MCF 10A (cell line): ENCODE measurements at regions of chr13 and their contacts with region 1.

Region 1: DNA sequence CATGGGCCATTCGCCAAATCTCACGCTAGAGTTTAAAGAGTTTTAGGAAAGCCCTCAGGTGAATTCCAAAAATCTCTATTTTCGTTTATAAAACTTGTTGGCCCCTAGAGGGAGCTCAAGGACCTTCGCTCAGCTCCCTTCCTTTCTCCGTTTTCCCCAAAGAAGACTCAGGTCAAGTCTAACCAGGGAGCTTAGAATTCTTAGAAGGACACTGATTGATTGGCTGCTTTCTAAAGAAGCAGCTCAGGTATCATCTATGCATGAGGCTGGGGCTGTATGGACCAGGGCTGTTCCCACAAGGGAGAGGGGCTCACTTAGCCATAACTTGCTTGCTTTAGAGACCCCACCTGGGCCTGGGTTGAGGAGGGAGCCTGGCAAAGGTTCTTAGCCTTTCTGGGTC is 20.5 kb downstream of the DZIP1 start:
- DNase-seq: peak; percentile 81
- H3K4me3 Mint-ChIP-seq: no peak overlapping the region
- H3K27ac Mint-ChIP-seq: no peak overlapping the region
- H3K4me1 Mint-ChIP-seq: no peaks in the 10 kb centered on the region
- H3K27me3 Mint-ChIP-seq: no peaks in the 10 kb centered on the region
- CTCF ChIP-seq: peak; percentile 73

Region 2: GRCh38 chr13:95585869-95586268 is 38.2 kb before region 1 on chr13:
- CTCF ChIA-PET with region 1: interaction called, 11 read pairs
- POLR2A ChIA-PET with region 1: no interaction called
- intact Hi-C with region 1: no loop called
- DNase-seq: no peak
- H3K4me3 Mint-ChIP-seq: no peak overlapping the region
- H3K27ac Mint-ChIP-seq: no peak overlapping the region
- H3K4me1 Mint-ChIP-seq: peaks cover 4% of the 10 kb centered on the region
- H3K27me3 Mint-ChIP-seq: no peaks in the 10 kb centered on the region
- CTCF ChIP-seq: no peak

Region 3: GRCh38 chr13:95603887-95604533 is 20.0 kb before region 1 on chr13:
- CTCF ChIA-PET with region 1: interaction called, 63 read pairs
- POLR2A ChIA-PET with region 1: interaction called, 15 read pairs
- intact Hi-C with region 1: no loop called
- DNase-seq: peak; percentile 97
- H3K4me3 Mint-ChIP-seq: peak overlapping the region; percentile 26
- H3K27ac Mint-ChIP-seq: peak overlapping the region; percentile 85
- H3K4me1 Mint-ChIP-seq: peaks cover 56% of the 10 kb centered on the region
- H3K27me3 Mint-ChIP-seq: no peaks in the 10 kb centered on the region
- CTCF ChIP-seq: no peak

Region 4: DNA sequence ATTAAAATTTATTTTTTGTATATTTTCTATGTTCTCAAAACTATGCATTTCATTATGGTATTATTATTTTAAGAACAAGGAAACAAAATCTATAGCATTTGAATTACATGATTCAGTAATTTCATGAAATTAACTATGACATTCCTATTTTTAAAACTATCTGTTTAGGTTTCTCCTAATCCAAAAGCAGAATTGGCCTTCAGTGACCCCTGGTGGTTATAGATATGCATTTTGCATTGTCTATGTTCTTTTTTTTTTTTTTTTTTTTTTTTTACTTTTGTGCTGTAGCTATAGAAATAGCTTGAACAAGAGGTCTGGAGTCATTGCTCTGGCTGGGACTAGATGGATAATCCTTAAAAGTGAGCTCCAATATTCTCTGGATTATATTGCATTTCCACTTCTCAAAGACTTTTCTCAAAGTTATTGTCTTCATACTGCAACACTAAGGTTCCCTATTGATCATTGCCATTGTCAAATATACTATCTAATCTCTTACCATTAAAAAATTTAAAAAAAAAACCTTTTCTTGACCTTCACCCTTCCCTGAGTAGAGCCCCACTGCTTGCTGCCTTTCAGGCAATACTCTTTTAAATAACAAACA is 37.1 kb after region 1 on chr13:
- CTCF ChIA-PET with region 1: interaction called, 72 read pairs
- POLR2A ChIA-PET with region 1: interaction called, 3 read pairs
- intact Hi-C with region 1: loop called (anchors 1 kb)
- DNase-seq: peak; percentile 88
- H3K4me3 Mint-ChIP-seq: no peak overlapping the region
- H3K27ac Mint-ChIP-seq: no peak overlapping the region
- H3K4me1 Mint-ChIP-seq: no peaks in the 10 kb centered on the region
- H3K27me3 Mint-ChIP-seq: no peaks in the 10 kb centered on the region
- CTCF ChIP-seq: peak; percentile 59

Region 5: DNA sequence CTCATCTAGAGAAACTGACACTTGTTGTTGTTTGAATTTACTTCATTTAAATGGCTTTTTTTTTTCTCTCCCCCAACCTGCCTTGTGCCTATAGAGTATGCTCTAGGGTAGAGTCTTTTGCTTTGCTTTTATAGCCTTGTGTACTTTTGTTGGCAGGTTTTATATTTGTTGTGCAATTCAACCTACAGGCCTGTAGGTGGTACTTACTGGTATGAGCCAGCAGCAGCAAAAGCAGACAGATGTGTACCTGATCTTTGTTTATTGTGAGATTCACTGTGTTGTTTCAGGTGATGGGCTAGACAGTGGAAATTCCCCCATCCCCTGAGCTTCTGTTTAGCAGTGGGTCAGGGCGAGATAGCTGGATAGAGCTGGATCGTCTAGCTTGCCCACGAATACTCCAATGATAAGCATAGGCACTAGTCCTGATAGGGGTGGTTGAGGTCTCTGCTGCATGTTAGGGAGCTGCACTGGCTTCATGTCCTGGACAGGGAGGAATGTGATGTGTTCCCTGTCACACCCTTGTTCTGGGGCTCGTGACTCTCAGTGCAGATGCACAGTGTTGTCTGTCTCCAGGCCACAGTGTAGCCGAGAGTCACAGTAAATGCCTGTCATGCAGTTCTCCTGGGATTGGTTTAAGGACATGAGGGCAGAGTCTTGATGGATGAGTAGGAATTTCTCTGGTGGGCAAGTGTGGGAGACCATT is 74.2 kb after region 1 on chr13:
- CTCF ChIA-PET with region 1: interaction called, 11 read pairs
- POLR2A ChIA-PET with region 1: no interaction called
- intact Hi-C with region 1: no loop called
- DNase-seq: peak; percentile 70
- H3K4me3 Mint-ChIP-seq: no peak overlapping the region
- H3K27ac Mint-ChIP-seq: peak overlapping the region; percentile 36
- H3K4me1 Mint-ChIP-seq: peaks cover 33% of the 10 kb centered on the region
- H3K27me3 Mint-ChIP-seq: no peaks in the 10 kb centered on the region
- CTCF ChIP-seq: peak; percentile 60

Region 6: GRCh38 chr13:95741584-95742563 is 117.9 kb after region 1 on chr13:
- CTCF ChIA-PET with region 1: no interaction called
- POLR2A ChIA-PET with region 1: no interaction called
- intact Hi-C with region 1: no loop called
- DNase-seq: no peak
- H3K4me3 Mint-ChIP-seq: no peak overlapping the region
- H3K27ac Mint-ChIP-seq: peak overlapping the region; percentile 15
- H3K4me1 Mint-ChIP-seq: peaks cover 14% of the 10 kb centered on the region
- H3K27me3 Mint-ChIP-seq: no peaks in the 10 kb centered on the region
- CTCF ChIP-seq: no peak